Tibial artery (tissue), 4 donors: ENCODE measurements at regions of chr22 and their contacts with region 1.

Region 1: DNA sequence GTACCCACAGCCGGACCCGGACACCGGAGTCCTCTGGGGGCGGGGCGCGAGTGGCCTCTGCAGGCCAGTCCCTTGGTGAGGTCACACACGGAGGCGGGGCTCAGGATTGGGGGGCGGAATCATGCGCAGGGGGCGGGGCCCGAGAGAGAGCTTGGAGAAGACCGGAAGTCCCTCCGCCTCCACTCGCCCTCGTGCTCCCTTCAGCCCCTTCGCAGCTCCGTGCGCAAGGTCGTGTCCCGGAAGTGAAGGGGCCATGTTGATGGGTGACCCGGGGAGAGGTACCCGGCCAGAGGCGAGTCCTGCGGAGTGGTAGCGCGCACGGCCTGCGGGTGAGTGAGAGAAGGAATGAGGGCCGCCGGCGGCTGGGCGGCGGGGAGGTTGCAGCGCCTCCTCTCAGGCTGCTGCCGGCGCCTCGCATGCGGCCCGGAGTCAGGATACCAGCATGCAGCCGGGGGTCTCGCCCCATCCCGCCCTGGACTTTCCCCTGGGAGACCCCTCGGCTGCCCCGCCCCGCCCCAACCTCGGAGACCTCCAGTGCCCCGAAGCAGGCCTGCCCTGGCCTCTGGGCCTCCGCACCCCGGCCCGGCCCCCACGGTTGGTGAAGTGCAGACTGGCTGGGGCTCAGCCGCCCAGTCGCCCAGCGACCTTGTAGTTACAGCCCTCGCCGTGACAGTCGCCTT is at the start of gene MIEF1:
- DNase-seq: peak; percentile 99
- H3K4me3 ChIP-seq: peak within 1 kb of the TSS; percentile 75 to 94
- H3K27ac ChIP-seq: peak within 1 kb of the TSS; percentile 67 to 71
- H3K4me1 ChIP-seq: peaks cover 0 to 36% (median 28%) of the 10 kb centered on the region in 4 donors
- H3K27me3 ChIP-seq: no peaks in the 10 kb centered on the region
- CTCF ChIP-seq: no peak

Region 2: GRCh38 chr22:39395936-39396796 is 106.1 kb before region 1 on chr22:
- intact Hi-C with region 1: loop called (anchors 5 kb)
- DNase-seq: no peak
- H3K4me3 ChIP-seq: no peak overlapping the region
- H3K27ac ChIP-seq: no peak overlapping the region
- H3K4me1 ChIP-seq: peaks cover 0 to 15% (median 9%) of the 10 kb centered on the region in 4 donors
- H3K27me3 ChIP-seq: no peaks in the 10 kb centered on the region
- CTCF ChIP-seq: no peak

Region 3: GRCh38 chr22:39598017-39598965 is 96.0 kb after region 1 on chr22:
- intact Hi-C with region 1: no loop called
- DNase-seq: no peak
- H3K4me3 ChIP-seq: no peak overlapping the region
- H3K27ac ChIP-seq: no peak overlapping the region
- H3K4me1 ChIP-seq: peaks cover 0 to under 1% (median 0%) of the 10 kb centered on the region in 4 donors
- H3K27me3 ChIP-seq: peaks cover 0 to 59% of the 10 kb centered on the region in 2 donors
- CTCF ChIP-seq: no peak

Region 4: GRCh38 chr22:40310081-40310767 is 808.0 kb after region 1 on chr22:
- intact Hi-C with region 1: no loop called
- DNase-seq: peak in 1 of 2 donors; percentile 29
- H3K4me3 ChIP-seq: no peak overlapping the region
- H3K27ac ChIP-seq: peak overlapping the region; percentile 42 to 43
- H3K4me1 ChIP-seq: peaks cover 0 to 17% (median 11%) of the 10 kb centered on the region in 4 donors
- H3K27me3 ChIP-seq: no peaks in the 10 kb centered on the region
- CTCF ChIP-seq: no peak